Naive thymus-derived CD4-positive, alpha-beta T cell (primary cell): ENCODE measurements at regions of chr15 and their contacts with region 1.

Region 1: DNA sequence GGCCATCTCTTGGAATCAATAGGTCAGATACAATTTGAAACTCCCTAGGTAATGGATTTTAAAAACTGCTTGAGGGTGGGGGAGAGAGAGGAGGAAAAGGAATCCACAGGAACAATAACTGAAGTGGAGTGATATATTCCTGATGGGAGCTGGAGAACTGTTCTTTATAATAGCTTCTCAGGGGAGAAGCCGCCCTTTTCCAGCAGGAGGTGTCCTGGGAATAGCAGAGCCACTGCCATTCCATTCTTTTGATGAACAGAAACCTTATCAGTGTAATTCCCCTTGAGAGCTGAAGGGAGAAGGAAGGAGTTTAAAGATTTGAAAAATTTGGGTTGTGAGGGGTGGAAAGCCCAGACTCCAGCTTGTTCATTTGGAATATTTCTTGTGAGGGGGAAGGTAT is 504.9 kb upstream of the DPH6 start:
- DNase-seq: no peak
- ATAC-seq: no peak
- H3K4me3 ChIP-seq: no peak overlapping the region
- H3K4me3 Mint-ChIP-seq: no peak overlapping the region
- H3K27ac ChIP-seq: no peak overlapping the region
- H3K27ac Mint-ChIP-seq: no peak overlapping the region
- H3K4me1 ChIP-seq: no peaks in the 10 kb centered on the region
- H3K4me1 Mint-ChIP-seq: no peaks in the 10 kb centered on the region
- H3K27me3 ChIP-seq: no peaks in the 10 kb centered on the region
- H3K27me3 Mint-ChIP-seq: peaks cover 0 to 6% (median 0%) of the 10 kb centered on the region in 5 donors

Region 2: DNA sequence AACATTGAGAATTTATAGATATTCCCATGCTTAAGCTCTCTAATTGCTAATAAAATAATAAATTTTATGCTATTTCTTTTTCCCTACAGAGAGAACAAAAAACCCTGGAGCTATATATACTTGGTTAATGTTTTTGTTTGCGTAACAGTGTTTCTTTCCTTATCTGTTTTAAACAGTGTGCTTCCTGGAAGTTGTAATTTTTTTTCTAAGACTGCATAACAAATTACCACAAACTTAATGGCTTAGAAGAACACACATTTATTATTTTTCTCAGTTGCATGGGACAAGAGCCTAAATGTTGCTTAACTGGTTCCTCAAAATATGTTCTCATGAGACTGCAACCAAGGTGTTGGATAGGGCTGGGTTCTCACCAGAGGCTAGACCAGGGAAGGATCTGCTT is 455.2 kb before region 1 on chr15:
- CTCF ChIA-PET with region 1: no interaction called
- POLR2A ChIA-PET with region 1: no interaction called
- intact Hi-C with region 1: no loop called
- DNase-seq: no peak
- ATAC-seq: no peak
- H3K4me3 ChIP-seq: no peak overlapping the region
- H3K4me3 Mint-ChIP-seq: no peak overlapping the region
- H3K27ac ChIP-seq: no peak overlapping the region
- H3K27ac Mint-ChIP-seq: no peak overlapping the region
- H3K4me1 ChIP-seq: no peaks in the 10 kb centered on the region
- H3K4me1 Mint-ChIP-seq: no peaks in the 10 kb centered on the region
- H3K27me3 ChIP-seq: no peaks in the 10 kb centered on the region
- H3K27me3 Mint-ChIP-seq: peaks cover 0 to 21% (median 13%) of the 10 kb centered on the region in 5 donors

Region 3: GRCh38 chr15:36133742-36134141 is 82.8 kb after region 1 on chr15:
- CTCF ChIA-PET with region 1: no interaction called
- POLR2A ChIA-PET with region 1: no interaction called
- intact Hi-C with region 1: loop called in 1 of 2 experiments (anchors 10 kb)
- DNase-seq: no peak
- ATAC-seq: no peak
- H3K4me3 ChIP-seq: no peak overlapping the region
- H3K4me3 Mint-ChIP-seq: no peak overlapping the region
- H3K27ac ChIP-seq: no peak overlapping the region
- H3K27ac Mint-ChIP-seq: no peak overlapping the region
- H3K4me1 ChIP-seq: no peaks in the 10 kb centered on the region
- H3K4me1 Mint-ChIP-seq: no peaks in the 10 kb centered on the region
- H3K27me3 ChIP-seq: peaks cover 0 to 2% of the 10 kb centered on the region in 2 donors
- H3K27me3 Mint-ChIP-seq: no peaks in the 10 kb centered on the region

Region 4: DNA sequence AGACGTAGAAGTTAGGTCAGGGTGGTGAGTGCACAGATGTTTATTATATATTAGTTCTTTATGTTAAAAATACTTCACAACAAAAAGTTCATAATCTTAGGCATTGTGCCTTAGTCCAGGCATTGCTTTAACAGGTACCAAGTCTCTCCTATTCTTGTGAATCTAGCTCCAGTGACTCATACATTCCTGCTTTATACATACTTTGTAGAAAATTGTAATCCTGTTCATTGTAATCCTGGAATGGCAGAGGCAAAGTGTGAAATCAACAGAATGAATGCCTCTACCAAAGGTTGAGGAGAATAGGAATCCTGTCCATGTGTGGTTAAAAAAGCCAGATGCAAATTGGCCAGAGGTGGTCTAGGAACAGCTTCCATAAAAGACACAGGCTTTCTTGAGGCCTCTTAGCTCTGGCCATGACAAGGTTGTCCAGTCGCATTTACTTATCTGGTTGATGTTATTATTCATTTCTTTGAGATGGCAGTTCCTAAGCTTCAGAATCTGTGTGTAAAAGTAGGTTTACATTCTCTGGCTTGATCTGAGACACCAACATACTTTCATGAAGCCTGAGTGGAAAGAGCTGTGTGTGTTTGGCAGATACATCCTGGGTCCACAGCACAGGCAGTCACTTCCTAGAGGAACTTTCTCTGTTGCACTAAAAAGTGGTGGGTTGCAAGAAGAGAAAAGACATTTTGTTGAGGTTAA is 637.6 kb after region 1 on chr15:
- CTCF ChIA-PET with region 1: no interaction called
- POLR2A ChIA-PET with region 1: no interaction called
- intact Hi-C with region 1: no loop called
- DNase-seq: no peak
- ATAC-seq: no peak
- H3K4me3 ChIP-seq: no peak overlapping the region
- H3K4me3 Mint-ChIP-seq: no peak overlapping the region
- H3K27ac ChIP-seq: no peak overlapping the region
- H3K27ac Mint-ChIP-seq: no peak overlapping the region
- H3K4me1 ChIP-seq: no peaks in the 10 kb centered on the region
- H3K4me1 Mint-ChIP-seq: no peaks in the 10 kb centered on the region
- H3K27me3 ChIP-seq: no peaks in the 10 kb centered on the region
- H3K27me3 Mint-ChIP-seq: no peaks in the 10 kb centered on the region